ENCODE measurements at regions of chr4 and their contacts with region 1.

Region 1: GRCh38 chr4:26827798-26828197 is 32.8 kb upstream of the STIM2 start:
- DNase-seq: no peak
- CTCF ChIP-seq: no peak

Region 2: GRCh38 chr4:26713563-26714151 is 114.1 kb before region 1 on chr4:
- CTCF ChIA-PET with region 1: no interaction called
- POLR2A ChIA-PET with region 1: no interaction called
- DNase-seq: no peak
- CTCF ChIP-seq: no peak

Region 3: DNA sequence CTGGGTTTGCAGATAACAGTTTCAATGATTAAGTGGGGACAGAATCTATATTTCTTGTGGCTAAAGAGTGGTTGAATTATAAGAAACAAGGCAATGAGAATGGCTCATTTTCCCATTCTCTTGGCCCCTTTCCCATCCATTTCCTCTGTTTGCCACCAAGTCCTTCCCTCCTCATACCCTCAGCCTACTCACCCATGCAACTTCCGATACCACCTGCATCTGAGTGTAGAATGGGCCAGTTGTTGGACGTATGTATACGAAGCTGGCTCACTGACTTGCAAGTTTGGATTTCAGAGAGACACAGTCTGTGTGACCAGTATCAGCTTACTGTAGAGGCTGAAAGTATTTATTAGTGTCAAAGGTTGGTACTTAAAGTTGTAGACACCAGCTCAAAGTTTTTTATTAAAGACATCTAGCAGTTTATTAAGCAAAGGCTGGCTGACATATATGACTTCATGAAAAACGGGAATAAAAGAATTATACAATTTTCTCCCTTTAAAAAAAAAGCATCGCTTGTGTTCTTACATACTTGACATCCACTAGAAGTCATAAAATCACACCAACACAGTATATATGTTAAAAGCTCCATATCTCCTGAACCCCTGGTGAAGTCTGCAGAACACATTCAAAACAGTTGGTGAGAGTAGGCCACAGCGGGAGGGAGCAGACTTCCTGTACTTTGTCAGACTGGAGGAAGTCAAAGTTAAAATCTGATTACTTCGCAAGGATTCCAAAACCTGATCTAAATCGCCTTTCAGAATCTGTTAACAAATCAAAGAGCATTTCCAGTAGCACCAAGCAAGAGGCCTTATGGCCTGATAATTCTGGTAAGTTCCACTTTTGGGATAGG is 10.4 kb after region 1 on chr4:
- CTCF ChIA-PET with region 1: interaction called, 10 read pairs
- POLR2A ChIA-PET with region 1: no interaction called
- DNase-seq: no peak
- CTCF ChIP-seq: no peak

Region 4: GRCh38 chr4:27084685-27085361 is 257.0 kb after region 1 on chr4:
- CTCF ChIA-PET with region 1: no interaction called
- POLR2A ChIA-PET with region 1: no interaction called
- DNase-seq: peak; percentile 19
- CTCF ChIP-seq: no peak

Region 5: GRCh38 chr4:27616166-27616565 is 788.4 kb after region 1 on chr4:
- CTCF ChIA-PET with region 1: no interaction called
- POLR2A ChIA-PET with region 1: no interaction called
- DNase-seq: no peak
- CTCF ChIP-seq: no peak